PC-3 (cell line): ENCODE measurements at regions of chr20 and their contacts with region 1.

Region 1: DNA sequence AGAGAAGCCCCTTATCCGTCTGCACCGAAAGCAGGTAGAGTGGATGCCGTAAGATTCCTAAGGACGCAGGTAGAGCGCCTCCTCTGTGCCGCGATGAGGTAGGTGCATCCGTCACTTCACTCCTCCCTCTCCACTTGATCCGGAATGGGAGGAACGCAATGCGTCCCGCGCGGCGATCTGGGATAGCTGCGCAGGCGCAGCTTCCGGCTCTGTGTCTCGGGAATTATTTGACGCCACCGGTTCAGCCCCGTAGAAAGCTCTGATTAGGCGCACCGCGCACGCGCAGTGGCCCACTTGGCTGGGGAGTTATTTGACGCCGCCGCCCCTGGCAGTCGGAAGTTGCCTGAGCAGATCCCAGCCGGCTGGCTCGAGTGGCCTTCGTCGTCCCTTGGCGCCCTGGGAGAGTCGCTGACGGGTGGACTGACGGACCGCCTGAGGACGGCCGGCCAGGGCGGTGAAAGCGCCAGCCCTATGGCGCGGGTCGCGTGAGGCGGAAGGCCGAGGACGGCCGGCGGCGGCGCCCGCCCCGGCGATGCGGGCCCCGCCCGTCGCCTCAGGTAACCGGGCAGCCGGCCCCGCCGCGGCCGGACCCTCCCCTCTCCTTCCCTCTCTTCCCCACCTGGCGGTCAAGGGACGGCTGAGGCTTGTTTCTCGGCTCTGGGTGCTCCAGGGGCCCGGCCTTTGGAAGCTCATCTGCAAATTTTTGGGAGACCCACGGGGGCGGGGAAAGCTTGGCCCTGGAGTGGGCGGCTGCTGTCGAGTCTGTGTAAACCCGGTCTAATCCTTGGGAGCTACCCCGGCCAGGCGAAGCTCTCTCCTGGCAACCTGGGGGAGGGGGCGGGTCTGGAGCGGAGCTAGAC is at the start of gene RALGAPB:
- DNase-seq: peak; percentile 100
- ATAC-seq: peak; percentile 95
- H3K4me3 ChIP-seq: peak within 1 kb of the TSS; percentile 88
- H3K27ac ChIP-seq: peak within 1 kb of the TSS; percentile 43
- H3K4me1 ChIP-seq: peaks cover 18% of the 10 kb centered on the region
- H3K27me3 ChIP-seq: no peaks in the 10 kb centered on the region
- CTCF ChIP-seq: peak; percentile 68
- total RNA-seq, gene RALGAPB: 28.0 and 30.4 TPM in 2 replicates

Region 2: GRCh38 chr20:38434743-38435554 is 37.8 kb before region 1 on chr20 and contains the start of gene SNHG17:
- CTCF ChIA-PET with region 1: interaction called, 5 read pairs
- POLR2A ChIA-PET with region 1: interaction called, 10 read pairs
- intact Hi-C with region 1: loop called (anchors 1 kb)
- DNase-seq: peak; percentile 94
- ATAC-seq: peak; percentile 84
- H3K4me3 ChIP-seq: peak within 1 kb of the TSS; percentile 95
- H3K27ac ChIP-seq: peak within 1 kb of the TSS; percentile 56
- H3K4me1 ChIP-seq: peaks cover 26% of the 10 kb centered on the region
- H3K27me3 ChIP-seq: no peaks in the 10 kb centered on the region
- CTCF ChIP-seq: peak; percentile 99
- total RNA-seq, gene SNHG17: 52.0 and 62.0 TPM in 2 replicates

Region 3: GRCh38 chr20:38452880-38453624 is 19.7 kb before region 1 on chr20:
- CTCF ChIA-PET with region 1: interaction called, 12 read pairs
- POLR2A ChIA-PET with region 1: interaction called, 5 read pairs
- intact Hi-C with region 1: no loop called
- DNase-seq: peak; percentile 78
- ATAC-seq: peak; percentile 82
- H3K4me3 ChIP-seq: no peak overlapping the region
- H3K27ac ChIP-seq: peak overlapping the region; percentile 23; the same call in 1 of the 2 replicates
- H3K4me1 ChIP-seq: peaks cover 31% of the 10 kb centered on the region
- H3K27me3 ChIP-seq: no peaks in the 10 kb centered on the region
- CTCF ChIP-seq: no peak

Region 4: DNA sequence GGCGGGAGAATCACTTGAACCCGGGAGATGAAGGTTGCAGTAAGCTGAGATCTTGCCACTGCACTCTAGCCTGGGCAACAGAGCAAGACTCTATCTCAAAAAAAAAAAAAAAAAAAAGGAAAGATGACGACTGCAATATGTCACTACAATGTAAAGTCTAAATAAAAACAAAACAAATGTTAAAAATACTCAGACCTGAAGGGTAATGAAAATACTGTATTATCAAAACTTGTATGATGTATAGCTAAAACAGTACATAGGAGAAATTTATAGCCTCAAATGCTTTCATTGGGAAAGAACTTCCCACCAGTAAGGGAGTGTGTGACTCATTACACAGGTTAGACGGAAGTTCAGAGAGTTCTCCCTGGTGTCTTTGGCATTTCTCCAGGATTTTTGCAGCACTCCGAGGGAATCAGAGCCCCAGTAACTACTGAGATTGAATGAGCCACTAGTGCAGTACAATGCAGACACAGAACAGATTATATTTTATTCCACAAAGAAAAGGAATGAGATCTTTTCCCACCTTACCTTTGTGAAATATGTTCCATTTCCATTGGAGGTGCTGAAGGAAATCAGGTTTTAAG is 12.6 kb before region 1 on chr20:
- CTCF ChIA-PET with region 1: interaction called, 12 read pairs
- POLR2A ChIA-PET with region 1: interaction called, 3 read pairs
- intact Hi-C with region 1: no loop called
- DNase-seq: peak; percentile 91
- ATAC-seq: peak; percentile 98
- H3K4me3 ChIP-seq: no peak overlapping the region
- H3K27ac ChIP-seq: peak overlapping the region; percentile 25; the same call in 1 of the 2 replicates
- H3K4me1 ChIP-seq: peaks cover 10% of the 10 kb centered on the region
- H3K27me3 ChIP-seq: no peaks in the 10 kb centered on the region
- CTCF ChIP-seq: no peak

Region 5: DNA sequence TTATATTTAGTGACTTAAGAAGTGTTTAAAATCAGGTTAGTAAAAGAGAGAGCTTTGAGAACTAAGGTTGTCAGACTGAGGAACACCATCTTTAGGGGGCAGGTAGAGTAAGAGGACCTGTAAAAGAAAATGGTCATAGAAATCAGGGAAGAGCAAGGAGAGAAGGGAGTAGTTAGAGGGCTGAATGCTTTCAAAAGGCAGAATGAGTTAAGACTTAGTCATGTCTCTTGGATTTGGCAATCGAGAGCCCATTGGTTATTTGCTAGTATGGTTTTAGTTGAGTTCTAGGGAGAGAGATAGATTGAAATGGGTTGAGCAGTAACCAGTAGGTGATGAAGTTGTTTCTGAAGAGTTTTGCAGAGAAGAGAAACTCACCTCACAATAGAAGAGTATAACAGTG is 51.0 kb after region 1 on chr20:
- CTCF ChIA-PET with region 1: no interaction called
- POLR2A ChIA-PET with region 1: interaction called, 10 read pairs
- intact Hi-C with region 1: no loop called
- DNase-seq: peak; percentile 69
- ATAC-seq: peak; percentile 68
- H3K4me3 ChIP-seq: no peak overlapping the region
- H3K27ac ChIP-seq: no peak overlapping the region
- H3K4me1 ChIP-seq: peaks cover 11% of the 10 kb centered on the region; the same call in 1 of the 2 replicates
- H3K27me3 ChIP-seq: no peaks in the 10 kb centered on the region
- CTCF ChIP-seq: no peak